Activated CD4-positive, alpha-beta T cell treated with anti-CD3 and anti-CD28 coated beads, Interleukin-2, amount 10 ng/mL, durations not matched to agents 7 days and 5 days (primary cell): ENCODE measurements at regions of chr5 and their contacts with region 1.

Region 1: GRCh38 chr5:79242242-79243039 is 6.5 kb downstream of the JMY start:
- DNase-seq: no peak
- H3K4me3 Mint-ChIP-seq: no peak overlapping the region
- H3K27ac Mint-ChIP-seq: no peak overlapping the region
- H3K4me1 Mint-ChIP-seq: peaks cover 46% of the 10 kb centered on the region
- H3K27me3 Mint-ChIP-seq: no peaks in the 10 kb centered on the region

Region 2: GRCh38 chr5:79753092-79753491 is 510.7 kb after region 1 on chr5:
- CTCF ChIA-PET with region 1: no interaction called
- POLR2A ChIA-PET with region 1: interaction called, 12 read pairs
- DNase-seq: no peak
- H3K4me3 Mint-ChIP-seq: no peak overlapping the region
- H3K27ac Mint-ChIP-seq: no peak overlapping the region
- H3K4me1 Mint-ChIP-seq: peaks cover 11% of the 10 kb centered on the region
- H3K27me3 Mint-ChIP-seq: peaks cover 4% of the 10 kb centered on the region